H1 (cell line): ENCODE measurements at regions of chr1 and their contacts with region 1.

Region 1: DNA sequence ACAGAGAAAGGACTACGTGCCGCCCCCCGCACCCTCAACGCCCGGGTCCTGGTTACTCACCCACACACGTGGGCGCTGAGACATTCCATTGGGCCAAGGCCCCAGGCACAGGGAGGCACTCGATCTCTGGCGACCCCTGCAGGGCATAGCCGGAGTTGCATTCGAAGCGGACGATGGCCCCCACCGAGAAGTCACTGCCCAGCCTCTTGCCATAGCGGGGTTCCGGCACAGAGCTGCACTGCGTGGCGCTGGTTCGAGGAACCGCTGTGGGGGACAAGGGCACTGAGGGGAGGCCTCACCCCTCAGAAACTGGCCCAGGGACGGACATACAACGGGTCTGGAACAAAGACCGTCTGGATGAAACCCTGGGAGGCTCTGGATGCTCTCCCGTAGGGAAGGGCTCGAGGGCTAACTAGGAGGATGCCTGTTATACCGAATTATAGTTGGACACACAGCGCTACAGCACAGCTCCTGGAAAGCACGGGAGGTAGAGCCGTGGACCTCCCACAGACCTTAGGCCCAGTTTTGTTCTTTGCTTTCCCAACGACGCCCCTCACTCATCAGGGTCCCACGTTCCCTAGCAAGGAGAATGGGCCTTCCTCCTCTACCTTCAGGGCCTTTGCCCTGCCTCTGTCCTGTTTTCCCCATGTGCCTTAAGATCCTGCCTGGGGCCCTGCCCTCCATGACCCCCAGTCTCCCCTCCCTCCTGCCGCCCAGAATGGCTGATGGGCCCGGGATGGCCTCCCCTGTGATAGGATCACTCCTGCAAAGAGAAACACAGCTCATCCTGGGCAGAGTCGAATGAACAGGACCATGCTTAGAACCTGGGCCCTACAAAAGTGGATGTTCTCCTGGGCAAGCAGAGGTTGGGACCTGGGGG is 152.8 kb downstream of the ZSCAN20 start:
- DNase-seq: peak in 1 of 2 experiments; percentile 92
- H3K4me3 ChIP-seq: no peak overlapping the region
- H3K27ac ChIP-seq: no peak overlapping the region
- H3K4me1 ChIP-seq: no peaks in the 10 kb centered on the region
- H3K27me3 ChIP-seq: no peaks in the 10 kb centered on the region; a peak in 1 of 7 replicates
- CTCF ChIP-seq: peak; percentile 60 to 88 (median 87)
- EP300 ChIP-seq: no peak
- POLR2A ChIP-seq: no peak
- RAD21 ChIP-seq: peak; percentile 33 to 38

Region 2: GRCh38 chr1:33610864-33611455 is 14.3 kb before region 1 on chr1:
- CTCF ChIA-PET with region 1: interaction called, 30 read pairs
- POLR2A ChIA-PET with region 1: no interaction called
- DNase-seq: no peak
- H3K4me3 ChIP-seq: no peak overlapping the region
- H3K27ac ChIP-seq: no peak overlapping the region
- H3K4me1 ChIP-seq: no peaks in the 10 kb centered on the region
- H3K27me3 ChIP-seq: no peaks in the 10 kb centered on the region
- CTCF ChIP-seq: no peak
- EP300 ChIP-seq: no peak
- POLR2A ChIP-seq: no peak
- RAD21 ChIP-seq: no peak